ENCODE measurements at regions of chr15 and their contacts with region 1.

Region 1: GRCh38 chr15:46312133-46312740 is 677.4 kb downstream of the SQOR start:
- DNase-seq: peak; percentile 78
- H3K4me3 Mint-ChIP-seq: no peak overlapping the region
- H3K27ac Mint-ChIP-seq: no peak overlapping the region
- H3K4me1 Mint-ChIP-seq: no peaks in the 10 kb centered on the region
- H3K27me3 Mint-ChIP-seq: no peaks in the 10 kb centered on the region

Region 2: GRCh38 chr15:46091860-46092450 is 220.3 kb before region 1 on chr15:
- CTCF ChIA-PET with region 1: no interaction called
- intact Hi-C with region 1: loop called (anchors 5 kb)
- DNase-seq: peak; percentile 24
- H3K4me3 Mint-ChIP-seq: no peak overlapping the region
- H3K27ac Mint-ChIP-seq: no peak overlapping the region
- H3K4me1 Mint-ChIP-seq: no peaks in the 10 kb centered on the region
- H3K27me3 Mint-ChIP-seq: no peaks in the 10 kb centered on the region

Region 3: DNA sequence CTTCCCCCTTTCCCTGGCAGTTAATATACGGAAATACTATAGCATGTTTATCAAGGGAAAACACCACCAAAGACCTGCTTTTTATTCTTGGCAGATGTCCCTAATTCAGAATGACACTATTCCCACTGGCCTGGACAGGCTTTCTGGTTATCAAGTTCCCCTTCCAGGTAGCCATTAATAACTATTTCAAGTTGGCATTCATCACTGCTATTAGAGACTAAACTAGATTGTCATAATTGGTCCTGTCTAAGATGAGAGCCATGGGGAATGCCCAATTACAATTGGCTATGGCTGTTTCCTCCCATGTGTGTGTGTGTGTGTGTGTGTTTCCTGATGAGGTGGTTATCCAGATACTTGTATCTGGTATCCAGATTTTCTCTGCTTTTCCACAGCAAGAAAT is 69.3 kb before region 1 on chr15:
- CTCF ChIA-PET with region 1: no interaction called
- intact Hi-C with region 1: no loop called
- DNase-seq: no peak
- H3K4me3 Mint-ChIP-seq: no peak overlapping the region
- H3K27ac Mint-ChIP-seq: no peak overlapping the region
- H3K4me1 Mint-ChIP-seq: no peaks in the 10 kb centered on the region
- H3K27me3 Mint-ChIP-seq: peaks cover 3% of the 10 kb centered on the region

Region 4: GRCh38 chr15:46892687-46893086 is 580.5 kb after region 1 on chr15:
- CTCF ChIA-PET with region 1: no interaction called
- intact Hi-C with region 1: no loop called
- DNase-seq: no peak
- H3K4me3 Mint-ChIP-seq: no peak overlapping the region
- H3K27ac Mint-ChIP-seq: no peak overlapping the region
- H3K4me1 Mint-ChIP-seq: no peaks in the 10 kb centered on the region
- H3K27me3 Mint-ChIP-seq: no peaks in the 10 kb centered on the region

Measured in activated naive CD4-positive, alpha-beta T cell treated with anti-CD3 and anti-CD28 coated beads for 36 hours (primary cell).